CD8-positive, alpha-beta T cell (primary cell): ENCODE measurements at regions of chr11 and their contacts with region 1.

Region 1: GRCh38 chr11:2305140-2305840 is 3.5 kb downstream of the TSPAN32 start:
- DNase-seq: peak; percentile 67 to 93 (median 86)
- ATAC-seq: peak; percentile 52
- H3K4me3 ChIP-seq: peak overlapping the region; percentile 82 to 83
- H3K4me3 Mint-ChIP-seq: peak overlapping the region; percentile 91
- H3K27ac ChIP-seq: peak overlapping the region; percentile 48 to 61
- H3K27ac Mint-ChIP-seq: peak overlapping the region; percentile 86
- H3K4me1 ChIP-seq: peaks cover 56% of the 10 kb centered on the region
- H3K4me1 Mint-ChIP-seq: peaks cover 51% of the 10 kb centered on the region
- H3K27me3 ChIP-seq: no peaks in the 10 kb centered on the region
- H3K27me3 Mint-ChIP-seq: no peaks in the 10 kb centered on the region
- CTCF ChIP-seq: peak; percentile 78

Region 2: GRCh38 chr11:1882519-1883238 is 422.6 kb before region 1 on chr11:
- CTCF ChIA-PET with region 1: no interaction called
- POLR2A ChIA-PET with region 1: no interaction called
- intact Hi-C with region 1: no loop called
- DNase-seq: peak; percentile 57 to 91 (median 83)
- ATAC-seq: peak; percentile 91
- H3K4me3 ChIP-seq: no peak overlapping the region
- H3K4me3 Mint-ChIP-seq: no peak overlapping the region
- H3K27ac ChIP-seq: no peak overlapping the region
- H3K27ac Mint-ChIP-seq: no peak overlapping the region
- H3K4me1 ChIP-seq: peaks cover 14% of the 10 kb centered on the region
- H3K4me1 Mint-ChIP-seq: peaks cover 12% of the 10 kb centered on the region
- H3K27me3 ChIP-seq: no peaks in the 10 kb centered on the region
- H3K27me3 Mint-ChIP-seq: no peaks in the 10 kb centered on the region
- CTCF ChIP-seq: peak; percentile 69

Region 3: DNA sequence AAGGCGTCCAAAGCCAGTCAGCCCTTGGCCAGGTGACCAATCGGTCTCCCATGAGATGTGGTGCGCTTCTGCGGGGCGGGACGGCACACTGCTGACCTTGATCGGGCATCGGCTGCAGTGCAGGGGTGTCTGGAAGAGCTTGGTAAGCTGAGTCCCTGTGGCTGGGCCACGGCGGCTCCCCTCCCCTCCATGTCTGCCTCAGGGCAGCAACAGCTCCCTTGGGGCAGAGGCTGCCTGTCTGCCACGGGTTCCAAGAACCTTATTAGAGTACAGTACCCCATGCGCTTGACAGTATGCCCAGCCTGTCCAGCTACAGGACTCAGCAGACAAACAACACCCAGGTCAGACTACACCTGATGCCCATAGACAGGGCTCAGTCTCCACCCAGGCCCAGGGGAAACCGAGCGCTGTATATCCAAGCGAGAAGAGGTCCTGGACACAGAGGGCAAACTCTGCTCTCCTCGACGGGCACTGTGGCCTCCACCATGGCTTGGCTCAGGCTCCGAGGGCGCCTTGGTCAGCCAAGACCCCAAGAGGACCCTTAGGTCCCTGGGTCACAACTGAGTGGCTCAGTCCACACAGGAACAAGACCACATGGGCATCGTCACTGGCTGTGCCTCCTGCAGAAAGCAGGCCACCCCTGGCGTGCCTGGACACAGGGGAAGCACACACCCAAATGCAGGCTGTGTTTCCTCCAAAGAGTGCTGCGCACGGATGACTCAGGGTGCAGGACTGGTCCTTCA is 15.4 kb after region 1 on chr11:
- CTCF ChIA-PET with region 1: interaction called, 30 read pairs
- POLR2A ChIA-PET with region 1: interaction called, 48 read pairs
- intact Hi-C with region 1: no loop called
- DNase-seq: no peak
- ATAC-seq: no peak
- H3K4me3 ChIP-seq: no peak overlapping the region
- H3K4me3 Mint-ChIP-seq: no peak overlapping the region
- H3K27ac ChIP-seq: no peak overlapping the region
- H3K27ac Mint-ChIP-seq: no peak overlapping the region
- H3K4me1 ChIP-seq: peaks cover 14% of the 10 kb centered on the region
- H3K4me1 Mint-ChIP-seq: peaks cover 30% of the 10 kb centered on the region
- H3K27me3 ChIP-seq: no peaks in the 10 kb centered on the region
- H3K27me3 Mint-ChIP-seq: no peaks in the 10 kb centered on the region
- CTCF ChIP-seq: no peak

Region 4: DNA sequence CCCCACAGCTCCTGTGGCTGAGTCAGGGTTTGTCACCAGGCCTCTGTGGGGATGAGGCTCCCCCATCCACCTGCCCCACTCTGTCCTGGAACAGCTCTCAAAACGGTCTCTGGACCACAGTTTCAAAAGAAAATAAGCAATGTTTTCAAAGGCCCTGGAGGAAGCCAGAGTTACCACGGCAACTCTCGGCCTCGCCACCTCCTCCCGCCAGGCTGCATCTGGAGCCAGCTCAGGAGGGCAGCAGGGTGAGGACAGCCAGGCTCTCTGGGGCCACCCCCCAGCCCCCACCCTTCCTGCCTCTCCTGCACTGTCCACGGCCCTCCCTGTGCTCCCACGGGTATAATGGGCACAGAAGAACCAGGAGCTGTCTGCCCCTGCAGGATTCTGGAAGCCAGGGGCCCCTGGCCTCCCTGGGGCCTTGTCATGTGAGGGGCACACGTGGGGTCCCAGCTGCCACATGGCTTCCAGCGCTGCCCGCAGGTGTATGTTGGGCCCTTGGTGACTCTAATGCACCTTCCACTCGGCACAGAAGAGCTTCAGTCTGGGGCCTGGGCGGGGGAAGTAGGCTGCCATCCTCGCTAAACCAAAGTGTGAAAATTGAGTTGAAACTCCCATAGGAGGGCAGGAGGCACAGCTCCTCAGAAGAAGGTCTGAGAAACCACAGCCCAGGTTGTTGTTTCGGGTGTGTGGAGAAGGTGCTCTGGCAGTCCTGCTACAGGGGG is 82.1 kb after region 1 on chr11:
- CTCF ChIA-PET with region 1: interaction called, 17 read pairs
- POLR2A ChIA-PET with region 1: interaction called, 6 read pairs
- intact Hi-C with region 1: no loop called
- DNase-seq: peak in 6 of 9 experiments; percentile 32 to 85 (median 59)
- ATAC-seq: peak; percentile 56
- H3K4me3 ChIP-seq: peak overlapping the region in 1 of 2 experiments; percentile 31
- H3K4me3 Mint-ChIP-seq: peak overlapping the region; percentile 18
- H3K27ac ChIP-seq: peak overlapping the region in 1 of 2 experiments; percentile 72
- H3K27ac Mint-ChIP-seq: peak overlapping the region; percentile 55
- H3K4me1 ChIP-seq: peaks cover 61% of the 10 kb centered on the region
- H3K4me1 Mint-ChIP-seq: peaks cover 60% of the 10 kb centered on the region
- H3K27me3 ChIP-seq: no peaks in the 10 kb centered on the region
- H3K27me3 Mint-ChIP-seq: no peaks in the 10 kb centered on the region
- CTCF ChIP-seq: no peak

Region 5: DNA sequence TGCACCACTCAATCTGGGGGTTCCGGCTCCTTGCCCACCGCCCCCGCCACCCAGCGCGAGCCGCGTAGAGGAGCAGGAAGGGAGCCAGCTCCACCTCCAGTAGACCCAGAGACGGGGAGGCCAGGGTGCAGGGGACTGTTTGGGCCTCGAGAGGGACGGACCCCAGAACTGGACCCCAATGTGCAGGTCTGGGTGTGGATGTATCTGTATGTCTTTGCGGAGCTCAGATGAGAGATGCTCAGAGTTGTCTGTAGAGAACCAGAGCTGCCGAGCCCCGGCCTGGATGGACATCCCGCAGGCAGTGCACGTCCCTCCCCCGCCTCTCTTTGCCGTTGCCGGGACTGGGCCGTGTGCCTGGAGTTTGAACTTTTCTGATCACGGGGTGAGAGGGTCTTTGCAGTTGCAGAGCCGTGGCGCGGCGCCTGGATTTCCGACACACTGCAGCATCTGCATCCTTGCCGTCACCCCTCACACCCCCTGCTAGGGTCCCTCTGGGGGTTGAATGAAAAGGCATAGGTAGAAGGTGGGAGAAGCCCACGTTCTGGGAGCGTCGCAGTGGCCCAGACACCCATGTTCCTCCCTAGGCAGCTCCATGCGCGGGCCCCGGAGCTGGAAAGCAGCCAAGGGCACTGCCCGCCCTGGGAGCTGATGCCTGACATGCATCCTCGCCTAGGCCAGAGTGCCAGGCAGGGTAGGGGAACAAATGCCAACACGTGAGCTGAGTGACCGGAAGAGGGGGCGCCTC is 244.8 kb after region 1 on chr11:
- CTCF ChIA-PET with region 1: no interaction called
- POLR2A ChIA-PET with region 1: no interaction called
- intact Hi-C with region 1: no loop called
- DNase-seq: no peak
- ATAC-seq: no peak
- H3K4me3 ChIP-seq: no peak overlapping the region
- H3K4me3 Mint-ChIP-seq: no peak overlapping the region
- H3K27ac ChIP-seq: no peak overlapping the region
- H3K27ac Mint-ChIP-seq: no peak overlapping the region
- H3K4me1 ChIP-seq: no peaks in the 10 kb centered on the region
- H3K4me1 Mint-ChIP-seq: peaks cover 8% of the 10 kb centered on the region
- H3K27me3 ChIP-seq: no peaks in the 10 kb centered on the region
- H3K27me3 Mint-ChIP-seq: no peaks in the 10 kb centered on the region
- CTCF ChIP-seq: no peak